IMR-90 (cell line): ENCODE measurements at regions of chr10 and their contacts with region 1.

Region 1: GRCh38 chr10:23994479-23995046 is 214.4 kb upstream of the KIAA1217 start:
- DNase-seq: peak; percentile 39
- ATAC-seq: peak; percentile 70
- H3K4me3 ChIP-seq: no peak overlapping the region
- H3K27ac ChIP-seq: no peak overlapping the region
- H3K4me1 ChIP-seq: no peaks in the 10 kb centered on the region
- H3K27me3 ChIP-seq: no peaks in the 10 kb centered on the region
- CTCF ChIP-seq: peak; percentile 70
- POLR2A ChIP-seq: no peak
- RAD21 ChIP-seq: peak; percentile 77

Region 2: GRCh38 chr10:24201503-24202180 is 207.1 kb after region 1 on chr10:
- CTCF ChIA-PET with region 1: no interaction called
- POLR2A ChIA-PET with region 1: no interaction called
- dilution Hi-C with region 1: no loop called
- in situ Hi-C with region 1: no loop called
- intact Hi-C with region 1: loop called (anchors 1 kb)
- DNase-seq: no peak
- ATAC-seq: no peak
- H3K4me3 ChIP-seq: no peak overlapping the region
- H3K27ac ChIP-seq: no peak overlapping the region
- H3K4me1 ChIP-seq: no peaks in the 10 kb centered on the region
- H3K27me3 ChIP-seq: peaks cover 2% of the 10 kb centered on the region; the same call in 1 of the 2 replicates
- CTCF ChIP-seq: no peak
- POLR2A ChIP-seq: no peak
- RAD21 ChIP-seq: no peak

Region 3: DNA sequence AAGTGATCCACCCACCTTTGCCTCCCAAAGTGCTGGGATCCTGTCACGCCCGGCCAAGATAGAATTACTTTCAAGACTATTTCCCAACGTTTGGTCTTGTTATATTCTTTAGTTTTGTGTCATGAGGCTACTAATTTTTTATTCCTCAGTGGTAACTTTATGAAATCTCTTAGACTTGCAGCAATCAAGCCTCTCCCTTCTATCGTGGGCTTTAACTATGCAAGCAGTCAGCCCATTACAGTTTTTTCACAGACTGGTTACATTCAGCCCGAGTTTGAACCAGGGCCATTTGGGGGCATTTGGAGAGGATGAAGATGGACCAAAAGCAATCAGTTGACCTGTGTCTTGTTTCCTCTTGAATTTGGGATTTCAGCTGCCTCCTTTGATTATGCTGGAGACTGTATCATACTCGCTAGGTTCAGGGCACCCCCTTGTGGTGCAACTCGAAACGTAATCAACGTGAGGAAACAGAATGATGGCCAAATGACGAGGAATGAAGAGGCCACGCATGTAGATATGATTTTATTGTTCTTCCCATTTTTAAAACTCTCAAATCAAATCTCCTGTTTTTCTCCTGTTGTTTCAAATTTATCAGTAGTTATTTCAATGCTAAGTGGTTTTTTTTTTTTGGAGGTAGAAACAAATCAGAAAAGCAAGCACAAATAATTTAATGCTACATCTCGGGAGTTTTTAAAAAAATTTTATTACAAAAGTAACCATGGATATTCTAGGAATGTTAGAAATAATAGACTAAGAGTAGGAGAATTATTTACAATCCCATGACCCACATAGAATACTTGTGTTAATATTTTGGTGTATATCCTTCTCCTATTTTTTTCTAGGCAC is 365.9 kb after region 1 on chr10:
- CTCF ChIA-PET with region 1: interaction called, 8 read pairs
- POLR2A ChIA-PET with region 1: no interaction called
- dilution Hi-C with region 1: no loop called
- in situ Hi-C with region 1: loop called (anchors 10 kb)
- intact Hi-C with region 1: loop called (anchors 1 kb)
- DNase-seq: peak; percentile 73
- ATAC-seq: peak; percentile 88
- H3K4me3 ChIP-seq: no peak overlapping the region
- H3K27ac ChIP-seq: no peak overlapping the region
- H3K4me1 ChIP-seq: no peaks in the 10 kb centered on the region
- H3K27me3 ChIP-seq: no peaks in the 10 kb centered on the region
- CTCF ChIP-seq: peak; percentile 79
- POLR2A ChIP-seq: no peak
- RAD21 ChIP-seq: peak; percentile 90

Region 4: DNA sequence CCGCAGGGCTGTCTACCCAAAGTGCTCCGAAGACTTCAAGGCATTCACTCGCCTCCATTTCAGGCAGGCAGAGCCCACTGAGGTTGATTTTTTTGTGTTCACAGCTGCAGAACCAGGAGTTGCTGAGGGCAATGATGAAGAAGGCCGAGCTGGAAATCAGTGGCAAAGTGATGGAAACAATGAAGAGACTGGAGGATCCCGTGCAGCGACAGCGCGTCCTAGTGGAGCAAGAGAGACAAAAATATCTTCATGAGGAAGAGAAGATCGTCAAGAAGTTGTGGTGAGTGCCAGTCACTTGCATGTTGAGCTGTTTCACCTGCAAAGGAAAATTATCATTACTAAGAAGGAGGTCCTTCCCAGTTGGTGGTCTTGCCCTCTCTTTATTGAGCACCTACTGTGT is 518.6 kb after region 1 on chr10:
- CTCF ChIA-PET with region 1: interaction called, 20 read pairs
- POLR2A ChIA-PET with region 1: no interaction called
- dilution Hi-C with region 1: no loop called
- in situ Hi-C with region 1: loop called (anchors 5 kb)
- intact Hi-C with region 1: loop called (anchors 1 kb)
- DNase-seq: peak; percentile 34
- ATAC-seq: peak; percentile 48; the same call in 1 of the 2 replicates
- H3K4me3 ChIP-seq: no peak overlapping the region
- H3K27ac ChIP-seq: no peak overlapping the region
- H3K4me1 ChIP-seq: no peaks in the 10 kb centered on the region
- H3K27me3 ChIP-seq: no peaks in the 10 kb centered on the region
- CTCF ChIP-seq: peak; percentile 58
- POLR2A ChIP-seq: no peak
- RAD21 ChIP-seq: peak; percentile 60

Region 5: GRCh38 chr10:24518981-24519597 is 524.5 kb after region 1 on chr10:
- CTCF ChIA-PET with region 1: interaction called, 20 read pairs
- POLR2A ChIA-PET with region 1: no interaction called
- dilution Hi-C with region 1: no loop called
- in situ Hi-C with region 1: loop called (anchors 5 kb)
- intact Hi-C with region 1: loop called (anchors 1 kb)
- DNase-seq: peak; percentile 60
- ATAC-seq: peak; percentile 90
- H3K4me3 ChIP-seq: no peak overlapping the region
- H3K27ac ChIP-seq: no peak overlapping the region
- H3K4me1 ChIP-seq: no peaks in the 10 kb centered on the region; the same call in 1 of the 2 replicates
- H3K27me3 ChIP-seq: no peaks in the 10 kb centered on the region
- CTCF ChIP-seq: peak; percentile 84
- POLR2A ChIP-seq: no peak
- RAD21 ChIP-seq: peak; percentile 89

Region 6: GRCh38 chr10:24556750-24557742 is 562.5 kb after region 1 on chr10:
- CTCF ChIA-PET with region 1: interaction called, 11 read pairs
- POLR2A ChIA-PET with region 1: no interaction called
- dilution Hi-C with region 1: no loop called
- in situ Hi-C with region 1: loop called (anchors 10 kb)
- intact Hi-C with region 1: no loop called
- DNase-seq: peak; percentile 79
- ATAC-seq: peak; percentile 93
- H3K4me3 ChIP-seq: no peak overlapping the region
- H3K27ac ChIP-seq: no peak overlapping the region
- H3K4me1 ChIP-seq: no peaks in the 10 kb centered on the region
- H3K27me3 ChIP-seq: peaks cover 3% of the 10 kb centered on the region; the same call in 1 of the 2 replicates
- CTCF ChIP-seq: peak; percentile 75
- POLR2A ChIP-seq: no peak
- RAD21 ChIP-seq: peak; percentile 65